Activated CD8-positive, alpha-beta T cell treated with anti-CD3 and anti-CD28 coated beads, Interleukin-2, amount 10 ng/mL, durations not matched to agents 7 days and 5 days (primary cell): ENCODE measurements at regions of chr11 and their contacts with region 1.

Region 1: DNA sequence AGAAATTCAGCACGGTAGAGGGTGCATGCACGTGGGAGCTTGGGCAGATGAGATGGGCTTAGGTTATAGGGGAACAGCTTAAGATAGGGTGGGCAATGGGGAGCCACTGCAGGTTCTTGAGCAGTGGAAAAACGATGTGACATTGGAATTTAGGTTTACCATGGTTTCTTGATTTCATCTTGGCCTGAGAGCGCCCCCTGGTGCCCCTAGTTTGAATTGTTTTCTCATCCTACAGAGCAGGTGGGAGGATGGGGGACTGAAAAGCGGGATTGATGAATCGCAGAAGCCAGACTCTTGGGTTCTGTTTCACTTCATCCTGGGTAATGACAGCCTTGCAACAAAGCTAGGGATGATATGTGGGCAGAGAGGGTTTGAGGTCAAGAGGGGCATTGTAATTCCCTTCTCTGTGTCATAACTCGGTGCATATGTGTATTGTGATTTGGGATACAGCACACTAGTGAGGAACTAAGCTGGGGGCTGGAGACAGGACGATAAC is 6.7 kb upstream of the MCAM start:
- DNase-seq: peak; percentile 87
- ATAC-seq: no peak
- H3K4me3 Mint-ChIP-seq: no peak overlapping the region
- H3K27ac Mint-ChIP-seq: no peak overlapping the region
- H3K4me1 Mint-ChIP-seq: peaks cover 28% of the 10 kb centered on the region
- H3K27me3 Mint-ChIP-seq: peaks cover 6% of the 10 kb centered on the region

Region 2: GRCh38 chr11:119168471-119169281 is 154.9 kb before region 1 on chr11 and contains the start of gene NLRX1:
- CTCF ChIA-PET with region 1: interaction called, 17 read pairs
- POLR2A ChIA-PET with region 1: no interaction called
- DNase-seq: peak; percentile 92
- ATAC-seq: peak; percentile 96
- H3K4me3 Mint-ChIP-seq: peak within 1 kb of the TSS; percentile 86
- H3K27ac Mint-ChIP-seq: peak within 1 kb of the TSS; percentile 92
- H3K4me1 Mint-ChIP-seq: peaks cover 30% of the 10 kb centered on the region
- H3K27me3 Mint-ChIP-seq: no peaks in the 10 kb centered on the region
- total RNA-seq, gene NLRX1: 24.6 to 24.8 TPM

Region 3: DNA sequence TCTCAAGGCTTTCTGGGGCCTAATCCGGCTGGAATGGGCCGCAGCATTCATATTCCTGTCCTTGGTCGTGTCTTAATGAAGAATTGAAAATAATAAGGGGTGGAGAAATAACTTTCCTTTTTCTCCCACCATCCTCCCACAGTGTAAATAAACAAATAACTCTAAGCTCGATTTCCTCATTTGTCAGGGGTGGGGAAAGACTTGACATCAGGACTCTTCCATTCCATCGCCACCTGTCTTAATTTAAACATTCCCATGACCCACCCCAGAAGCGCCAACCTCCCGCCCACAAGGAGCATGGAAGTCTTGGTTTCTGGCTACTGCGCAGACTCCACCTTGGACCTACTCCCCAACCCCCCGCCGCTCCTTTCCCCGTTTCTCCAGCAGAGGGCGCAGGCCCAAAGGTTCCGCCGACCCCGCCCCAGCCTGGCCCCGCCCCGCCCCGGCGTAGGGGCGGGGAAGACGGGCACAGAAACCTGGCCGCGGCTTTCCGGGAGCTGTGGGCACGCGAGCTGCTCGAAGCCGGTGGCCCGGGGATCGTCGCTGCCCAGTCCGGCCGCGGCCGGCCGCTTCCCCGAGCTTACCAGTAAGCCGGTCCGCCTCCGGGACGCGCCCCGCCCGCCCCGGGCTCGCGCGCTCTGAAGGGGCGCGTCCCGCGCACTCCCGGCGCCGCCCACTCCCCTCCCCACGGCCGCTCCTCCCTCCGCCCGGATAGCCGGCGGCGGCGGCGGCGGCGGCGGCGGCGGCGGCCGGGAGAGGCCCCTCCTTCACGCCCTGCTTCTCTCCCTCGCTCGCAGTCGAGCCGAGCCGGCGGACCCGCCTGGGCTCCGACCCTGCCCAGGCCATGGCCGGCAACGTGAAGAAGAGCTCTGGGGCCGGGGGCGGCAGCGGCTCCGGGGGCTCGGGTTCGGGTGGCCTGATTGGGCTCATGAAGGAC is 117.7 kb before region 1 on chr11 and contains the start of gene CBL:
- CTCF ChIA-PET with region 1: interaction called, 93 read pairs
- POLR2A ChIA-PET with region 1: interaction called, 10 read pairs
- DNase-seq: peak; percentile 97
- ATAC-seq: peak; percentile 87
- H3K4me3 Mint-ChIP-seq: peak within 1 kb of the TSS; percentile 99
- H3K27ac Mint-ChIP-seq: peak within 1 kb of the TSS; percentile 92
- H3K4me1 Mint-ChIP-seq: peaks cover 28% of the 10 kb centered on the region
- H3K27me3 Mint-ChIP-seq: no peaks in the 10 kb centered on the region
- total RNA-seq, gene CBL: 43.6 to 43.7 TPM

Region 4: GRCh38 chr11:119284344-119285157 is 39.0 kb before region 1 on chr11:
- CTCF ChIA-PET with region 1: interaction called, 16 read pairs
- POLR2A ChIA-PET with region 1: interaction called, 4 read pairs
- DNase-seq: peak; percentile 29
- ATAC-seq: peak; percentile 88
- H3K4me3 Mint-ChIP-seq: no peak overlapping the region
- H3K27ac Mint-ChIP-seq: no peak overlapping the region
- H3K4me1 Mint-ChIP-seq: peaks cover 31% of the 10 kb centered on the region
- H3K27me3 Mint-ChIP-seq: no peaks in the 10 kb centered on the region

Region 5: GRCh38 chr11:119306373-119306890 is 17.2 kb before region 1 on chr11:
- CTCF ChIA-PET with region 1: interaction called, 58 read pairs
- POLR2A ChIA-PET with region 1: interaction called, 7 read pairs
- DNase-seq: no peak
- ATAC-seq: peak; percentile 70
- H3K4me3 Mint-ChIP-seq: no peak overlapping the region
- H3K27ac Mint-ChIP-seq: peak overlapping the region; percentile 83
- H3K4me1 Mint-ChIP-seq: peaks cover 25% of the 10 kb centered on the region
- H3K27me3 Mint-ChIP-seq: no peaks in the 10 kb centered on the region